HEK293 (cell line): ENCODE measurements at regions of chr1 and their contacts with region 1.

Region 1: DNA sequence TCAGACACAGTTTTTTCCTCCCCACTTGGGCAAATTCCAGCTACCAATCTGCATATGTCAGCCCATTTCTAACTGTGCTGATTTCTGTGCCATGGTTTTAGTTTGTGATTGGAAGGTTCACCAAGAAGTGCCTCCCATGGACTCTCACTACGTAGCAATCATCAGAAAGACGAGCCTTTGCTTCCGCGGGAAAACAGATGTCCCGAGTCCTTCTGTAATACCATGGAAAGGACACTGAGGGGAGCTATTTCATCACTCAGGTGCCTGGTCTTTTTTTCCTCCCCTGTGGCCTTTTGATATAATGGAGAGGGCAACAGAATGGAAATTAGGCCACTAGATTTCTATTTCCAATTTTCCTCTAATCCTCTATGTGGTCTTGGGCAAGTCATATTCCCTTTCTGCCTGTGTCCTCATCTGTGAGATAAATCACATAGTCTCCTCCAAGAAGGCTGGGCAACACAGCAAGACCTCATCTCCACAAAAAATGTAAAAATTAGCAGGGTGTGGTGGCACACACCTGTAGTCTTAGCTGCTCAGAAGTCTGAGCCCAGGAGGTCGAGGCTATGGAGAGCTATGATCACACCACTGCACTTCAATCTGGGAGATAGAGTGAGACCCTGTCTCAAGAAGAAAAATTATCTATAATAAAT is 24.8 kb downstream of the LEMD1 start:
- H3K4me3 ChIP-seq: no peak overlapping the region
- H3K27ac ChIP-seq: no peak overlapping the region
- H3K4me1 ChIP-seq: no peaks in the 10 kb centered on the region
- CTCF ChIP-seq: peak; percentile 81

Region 2: DNA sequence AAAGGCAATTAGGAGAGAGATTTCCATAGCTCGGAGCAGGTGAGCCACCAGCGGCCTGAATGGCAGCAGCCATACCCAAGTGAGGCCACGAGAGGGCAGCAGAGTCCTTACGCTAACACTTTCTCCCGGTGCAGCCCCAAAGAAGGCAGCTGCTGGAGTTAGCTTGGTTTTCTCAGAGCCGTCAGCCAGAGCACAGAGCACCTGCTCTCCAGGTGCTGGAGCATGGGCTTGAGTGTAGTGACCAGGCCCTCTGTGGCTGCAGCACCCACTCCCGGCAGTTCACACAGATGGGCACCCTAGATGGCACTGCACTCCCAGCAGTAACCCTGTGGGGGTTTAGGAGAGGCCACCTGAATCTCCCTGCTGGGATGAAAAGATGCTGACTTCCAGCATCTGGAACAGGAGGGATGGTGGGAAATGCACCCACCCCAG is 123.5 kb before region 1 on chr1:
- CTCF ChIA-PET with region 1: interaction called, 17 read pairs
- POLR2A ChIA-PET with region 1: no interaction called
- H3K4me3 ChIP-seq: no peak overlapping the region
- H3K27ac ChIP-seq: no peak overlapping the region
- H3K4me1 ChIP-seq: no peaks in the 10 kb centered on the region
- CTCF ChIP-seq: peak; percentile 93

Region 3: GRCh38 chr1:205416322-205416721 is 19.2 kb after region 1 on chr1:
- CTCF ChIA-PET with region 1: interaction called, 17 read pairs
- POLR2A ChIA-PET with region 1: no interaction called
- H3K4me3 ChIP-seq: no peak overlapping the region
- H3K27ac ChIP-seq: no peak overlapping the region
- H3K4me1 ChIP-seq: peaks cover 3% of the 10 kb centered on the region; the same call in 1 of the 2 replicates
- CTCF ChIP-seq: no peak

Region 4: GRCh38 chr1:205430696-205431305 is 33.7 kb after region 1 on chr1:
- CTCF ChIA-PET with region 1: interaction called, 42 read pairs
- POLR2A ChIA-PET with region 1: no interaction called
- H3K4me3 ChIP-seq: peak overlapping the region; percentile 46
- H3K27ac ChIP-seq: no peak overlapping the region
- H3K4me1 ChIP-seq: 0 out of 2 replicates have a peak, but pooled peaks cover 2% of the 10 kb centered on the region
- CTCF ChIP-seq: peak; percentile 93

Region 5: DNA sequence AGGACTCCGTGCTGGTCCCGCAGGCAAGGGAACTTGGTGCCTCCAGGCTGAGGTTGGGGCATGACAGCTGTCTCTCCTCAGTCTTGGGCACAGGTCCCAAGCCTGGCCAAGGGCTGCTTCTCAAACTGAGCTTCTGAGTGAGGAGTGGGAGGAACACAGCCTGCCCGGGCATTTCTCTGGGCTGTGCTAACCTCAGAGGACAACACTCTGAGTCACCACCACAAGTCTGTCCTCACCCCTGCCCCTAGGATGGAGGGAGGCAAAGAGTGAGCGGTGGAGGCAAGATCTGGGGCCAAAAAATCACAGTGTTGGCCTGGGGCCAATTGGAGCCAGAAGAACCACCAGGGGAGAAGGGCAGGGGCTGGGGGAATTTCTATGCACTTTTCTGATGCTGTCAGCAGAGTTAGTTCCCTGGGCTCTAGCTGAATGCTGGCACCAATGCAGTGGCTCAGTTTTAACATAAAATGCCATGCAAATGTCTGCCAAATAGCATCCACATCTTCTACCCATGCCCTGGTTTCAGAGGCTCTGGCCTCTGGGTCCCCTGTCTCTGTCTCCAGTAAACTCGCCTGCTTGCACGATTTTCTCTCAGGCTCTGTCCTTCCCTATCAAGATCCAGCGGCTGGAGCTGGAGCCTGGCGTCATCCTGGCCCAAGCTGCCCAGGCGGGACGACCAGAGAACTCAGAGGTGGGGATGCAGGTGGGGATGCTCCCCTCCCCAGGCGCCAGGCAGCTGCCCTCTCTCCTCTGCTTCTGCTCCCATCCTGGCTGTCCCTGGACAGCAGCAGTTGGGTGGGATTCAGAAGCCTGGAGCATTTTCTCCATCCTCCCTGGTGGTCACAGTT is 96.4 kb after region 1 on chr1:
- CTCF ChIA-PET with region 1: interaction called, 201 read pairs
- POLR2A ChIA-PET with region 1: no interaction called
- H3K4me3 ChIP-seq: no peak overlapping the region
- H3K27ac ChIP-seq: no peak overlapping the region; the same call in 1 of the 2 replicates
- H3K4me1 ChIP-seq: peaks cover 16% of the 10 kb centered on the region
- CTCF ChIP-seq: no peak